ENCODE measurements at regions of chr7 and their contacts with region 1.

Region 1: DNA sequence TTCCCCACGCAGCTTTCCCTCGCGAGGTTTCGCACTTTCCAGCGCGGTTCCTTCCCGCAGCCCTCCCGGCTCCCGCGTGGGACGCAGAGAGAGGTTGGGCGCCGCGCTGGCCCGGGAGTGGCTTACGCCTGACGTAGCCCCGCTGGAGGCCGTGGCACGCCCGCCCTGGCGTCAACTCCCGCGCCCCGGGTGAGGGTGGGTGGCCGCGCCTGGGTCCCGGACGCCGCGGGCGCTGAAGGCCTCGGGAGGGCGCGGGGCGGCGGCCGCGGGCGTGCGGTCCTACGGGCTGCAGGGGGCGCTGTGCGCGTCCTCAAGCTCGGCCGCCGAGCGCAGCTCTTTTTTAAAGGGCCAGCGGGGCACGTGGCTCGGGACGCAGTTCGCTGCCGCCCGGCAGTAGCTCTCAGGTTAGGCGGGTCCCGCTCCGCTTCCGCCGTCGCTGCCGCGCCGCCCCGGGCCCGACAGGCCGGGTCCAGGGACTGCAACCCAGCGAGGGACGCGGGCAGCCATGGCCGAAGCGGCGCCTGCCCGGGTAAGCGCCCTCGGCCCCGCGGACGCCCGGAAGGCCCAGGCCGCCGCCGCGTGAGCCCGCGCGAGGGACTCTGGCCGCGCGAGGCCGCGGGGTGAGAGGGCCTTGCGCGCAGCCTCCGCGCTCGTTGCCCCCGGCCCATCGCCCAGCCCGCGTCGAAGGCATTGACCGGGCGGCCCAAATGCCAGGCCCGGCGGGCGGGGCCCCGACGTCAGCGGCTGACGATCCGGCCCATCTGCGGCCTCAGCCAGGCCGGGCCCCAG is at the start of gene ZNF783:
- DNase-seq: peak; percentile 84
- ATAC-seq: peak; percentile 80
- H3K4me3 Mint-ChIP-seq: peak within 1 kb of the TSS; percentile 79
- H3K27ac Mint-ChIP-seq: no peak within 1 kb of the TSS
- H3K4me1 Mint-ChIP-seq: no peaks in the 10 kb centered on the region
- H3K27me3 Mint-ChIP-seq: peaks cover 23% of the 10 kb centered on the region
- CTCF ChIP-seq: peak; percentile 79
- total RNA-seq, gene ZNF783: 9.9 to 12.1 TPM (median 12.0 TPM) in 3 replicates

Region 2: GRCh38 chr7:149195180-149196150 is 66.6 kb before region 1 on chr7 and contains the start of gene ZNF282:
- CTCF ChIA-PET with region 1: interaction called, 5 read pairs
- POLR2A ChIA-PET with region 1: interaction called, 14 read pairs
- DNase-seq: peak; percentile 95
- ATAC-seq: peak; percentile 96
- H3K4me3 Mint-ChIP-seq: peak within 1 kb of the TSS; percentile 88
- H3K27ac Mint-ChIP-seq: peak within 1 kb of the TSS; percentile 87
- H3K4me1 Mint-ChIP-seq: peaks cover 13% of the 10 kb centered on the region
- H3K27me3 Mint-ChIP-seq: no peaks in the 10 kb centered on the region
- CTCF ChIP-seq: no peak
- total RNA-seq, gene ZNF282: 34.8 to 39.3 TPM (median 38.5 TPM) in 3 replicates

Region 3: GRCh38 chr7:149284850-149285626 is 23.0 kb after region 1 on chr7:
- CTCF ChIA-PET with region 1: interaction called, 44 read pairs
- POLR2A ChIA-PET with region 1: interaction called, 7 read pairs
- DNase-seq: peak; percentile 99
- ATAC-seq: peak; percentile 96
- H3K4me3 Mint-ChIP-seq: peak overlapping the region; percentile 98
- H3K27ac Mint-ChIP-seq: peak overlapping the region; percentile 70; the same call in 1 of the 2 replicates
- H3K4me1 Mint-ChIP-seq: peaks cover 17% of the 10 kb centered on the region
- H3K27me3 Mint-ChIP-seq: peaks cover 27% of the 10 kb centered on the region
- CTCF ChIP-seq: no peak

Region 4: GRCh38 chr7:149310113-149310836 is 48.3 kb after region 1 on chr7:
- CTCF ChIA-PET with region 1: interaction called, 19 read pairs
- POLR2A ChIA-PET with region 1: no interaction called
- DNase-seq: no peak
- ATAC-seq: peak; percentile 80
- H3K4me3 Mint-ChIP-seq: no peak overlapping the region
- H3K27ac Mint-ChIP-seq: no peak overlapping the region
- H3K4me1 Mint-ChIP-seq: no peaks in the 10 kb centered on the region
- H3K27me3 Mint-ChIP-seq: peaks cover 3% of the 10 kb centered on the region
- CTCF ChIP-seq: peak; percentile 21; the same call in 1 of the 2 replicates

Region 5: GRCh38 chr7:149355390-149356048 is 93.5 kb after region 1 on chr7:
- CTCF ChIA-PET with region 1: interaction called, 15 read pairs
- POLR2A ChIA-PET with region 1: interaction called, 3 read pairs
- DNase-seq: peak; percentile 79
- ATAC-seq: peak; percentile 96
- H3K4me3 Mint-ChIP-seq: peak overlapping the region; percentile 72
- H3K27ac Mint-ChIP-seq: peak overlapping the region; percentile 91
- H3K4me1 Mint-ChIP-seq: peaks cover 15% of the 10 kb centered on the region
- H3K27me3 Mint-ChIP-seq: peaks cover 3% of the 10 kb centered on the region
- CTCF ChIP-seq: no peak

Region 6: GRCh38 chr7:149409895-149410294 is 147.9 kb after region 1 on chr7:
- CTCF ChIA-PET with region 1: interaction called, 21 read pairs
- POLR2A ChIA-PET with region 1: no interaction called
- DNase-seq: no peak
- ATAC-seq: no peak
- H3K4me3 Mint-ChIP-seq: no peak overlapping the region
- H3K27ac Mint-ChIP-seq: no peak overlapping the region
- H3K4me1 Mint-ChIP-seq: peaks cover 8% of the 10 kb centered on the region
- H3K27me3 Mint-ChIP-seq: peaks cover 15% of the 10 kb centered on the region
- CTCF ChIP-seq: no peak

Region 7: DNA sequence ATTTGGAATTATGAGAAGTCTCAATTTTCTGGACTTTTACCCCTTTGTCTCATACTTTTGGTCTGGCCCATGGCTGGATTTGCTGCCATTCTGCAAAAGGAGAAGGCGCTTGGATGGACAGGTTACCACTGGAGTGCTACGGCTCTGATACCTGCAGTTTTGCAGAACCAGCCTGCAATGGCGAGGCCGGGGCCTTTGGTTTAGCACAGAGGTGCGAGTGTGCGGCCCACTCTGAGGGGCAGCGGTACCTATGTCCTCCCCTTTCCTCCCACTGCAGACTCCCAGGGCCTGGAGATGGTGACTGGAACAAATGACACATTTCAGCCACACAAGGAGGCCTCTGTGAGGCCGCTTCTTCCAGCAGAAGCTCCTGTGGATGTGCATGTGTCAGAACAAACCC is 186.9 kb after region 1 on chr7:
- CTCF ChIA-PET with region 1: no interaction called
- POLR2A ChIA-PET with region 1: no interaction called
- DNase-seq: no peak
- ATAC-seq: no peak
- H3K4me3 Mint-ChIP-seq: no peak overlapping the region
- H3K27ac Mint-ChIP-seq: no peak overlapping the region
- H3K4me1 Mint-ChIP-seq: no peaks in the 10 kb centered on the region
- H3K27me3 Mint-ChIP-seq: no peaks in the 10 kb centered on the region
- CTCF ChIP-seq: no peak

Region 8: DNA sequence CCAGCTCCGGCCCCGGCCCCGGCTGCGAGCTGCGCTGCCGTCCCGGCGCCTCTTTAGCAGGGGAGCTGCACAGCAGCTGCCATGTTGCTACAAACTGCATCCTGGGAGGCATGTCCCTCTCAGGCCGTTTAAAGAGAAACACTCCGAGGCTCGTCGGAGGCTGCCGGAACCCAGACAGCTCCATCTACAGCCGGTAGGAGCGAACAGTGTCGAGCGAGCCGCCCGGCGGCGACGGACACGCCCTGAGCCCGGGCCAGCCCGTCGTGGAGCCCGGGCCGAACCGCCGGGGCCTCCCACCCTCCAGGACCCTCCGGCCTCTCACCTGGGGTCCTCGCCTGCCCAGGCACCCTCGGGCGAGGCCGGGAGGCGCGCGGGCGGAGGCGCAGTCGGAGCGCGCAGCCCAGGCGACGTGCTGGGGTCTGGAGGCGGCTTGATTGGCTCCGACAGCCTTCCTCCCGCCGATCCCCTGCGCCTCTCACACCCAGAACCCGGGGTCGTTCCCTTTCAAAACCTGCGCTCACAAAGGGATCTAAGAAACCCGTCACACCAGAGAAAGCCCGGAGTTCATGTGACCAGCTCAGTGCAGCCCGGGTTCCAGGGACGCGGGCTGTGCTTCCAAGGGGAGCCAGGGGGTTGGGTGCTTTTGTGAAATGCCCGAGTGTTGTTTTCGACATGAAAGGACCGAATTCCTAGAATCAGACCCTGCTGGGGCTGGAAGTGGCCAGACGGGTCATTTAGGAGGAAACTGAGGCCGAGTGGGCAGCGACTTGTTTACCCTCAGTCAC is 198.7 kb after region 1 on chr7 and contains the start of gene ZNF777:
- CTCF ChIA-PET with region 1: interaction called, 10 read pairs
- POLR2A ChIA-PET with region 1: no interaction called
- DNase-seq: peak; percentile 79
- ATAC-seq: peak; percentile 90
- H3K4me3 Mint-ChIP-seq: peak within 1 kb of the TSS; percentile 80
- H3K27ac Mint-ChIP-seq: peak within 1 kb of the TSS; percentile 65; the same call in 1 of the 2 replicates
- H3K4me1 Mint-ChIP-seq: peaks cover 17% of the 10 kb centered on the region
- H3K27me3 Mint-ChIP-seq: peaks cover 36% of the 10 kb centered on the region
- CTCF ChIP-seq: no peak
- total RNA-seq, gene ZNF777: 12.0 to 13.6 TPM (median 12.6 TPM) in 3 replicates

Measured in WTC11 (cell line).